Cardiac septum (tissue), 1 donor: ENCODE measurements at regions of chr16 and their contacts with region 1.

Region 1: DNA sequence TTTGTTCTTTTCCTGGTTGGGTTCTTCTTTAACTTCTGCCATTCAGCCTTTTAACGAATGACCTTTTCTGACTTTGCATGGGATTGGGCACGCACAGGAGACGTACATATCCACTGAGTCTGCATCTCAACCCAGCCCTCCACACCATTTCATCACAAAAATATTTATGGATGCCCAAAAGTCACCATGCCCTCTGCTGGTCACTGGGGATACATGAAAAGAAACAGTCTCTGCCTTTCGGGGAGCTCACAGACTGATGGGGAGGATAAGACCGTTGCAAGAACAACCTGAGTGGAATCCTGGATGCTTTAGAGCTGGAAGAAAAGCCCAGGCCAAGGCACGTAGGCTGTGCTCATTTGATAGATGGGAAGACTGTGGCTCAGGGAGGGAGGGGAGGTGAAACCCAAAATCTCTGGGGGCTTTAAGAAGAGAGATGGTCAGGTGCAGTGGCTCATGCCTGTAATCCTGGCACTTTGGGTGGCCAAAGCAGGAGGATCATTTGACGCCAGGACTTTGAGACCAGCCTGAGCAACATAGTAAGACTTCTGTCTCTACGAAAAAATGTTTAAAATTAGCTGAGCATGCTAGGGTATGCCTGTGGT is 7.9 kb upstream of the MT2A start:
- DNase-seq: no peak

Region 2: DNA sequence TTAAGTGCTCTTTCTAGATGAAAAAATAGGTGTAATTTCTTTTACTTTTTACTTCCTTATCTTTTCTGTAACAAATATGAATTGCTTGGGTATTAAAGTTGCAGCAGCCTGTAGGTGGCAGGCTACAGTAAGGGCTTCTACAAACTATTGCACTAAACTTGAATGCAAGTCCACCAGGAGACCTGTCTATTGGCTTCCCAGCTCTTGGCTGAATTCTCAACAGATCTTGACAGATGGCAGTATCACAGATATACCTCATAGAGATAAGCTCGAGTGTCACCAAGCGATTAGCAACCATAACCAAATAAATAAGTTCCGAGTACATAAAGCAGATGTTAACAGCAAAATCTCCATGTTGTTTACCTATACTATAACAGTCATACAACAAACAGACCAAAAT is 86.5 kb before region 1 on chr16:
- intact Hi-C with region 1: loop called (anchors 5 kb)
- DNase-seq: no peak

Region 3: GRCh38 chr16:56637814-56638750 is 37.6 kb after region 1 on chr16 and contains the start of gene MT1A:
- intact Hi-C with region 1: loop called (anchors 5 kb)
- DNase-seq: peak; percentile 89
- total RNA-seq, gene MT1A: 1.5 TPM